ENCODE measurements at regions of chr20 and their contacts with region 1.

Region 1: DNA sequence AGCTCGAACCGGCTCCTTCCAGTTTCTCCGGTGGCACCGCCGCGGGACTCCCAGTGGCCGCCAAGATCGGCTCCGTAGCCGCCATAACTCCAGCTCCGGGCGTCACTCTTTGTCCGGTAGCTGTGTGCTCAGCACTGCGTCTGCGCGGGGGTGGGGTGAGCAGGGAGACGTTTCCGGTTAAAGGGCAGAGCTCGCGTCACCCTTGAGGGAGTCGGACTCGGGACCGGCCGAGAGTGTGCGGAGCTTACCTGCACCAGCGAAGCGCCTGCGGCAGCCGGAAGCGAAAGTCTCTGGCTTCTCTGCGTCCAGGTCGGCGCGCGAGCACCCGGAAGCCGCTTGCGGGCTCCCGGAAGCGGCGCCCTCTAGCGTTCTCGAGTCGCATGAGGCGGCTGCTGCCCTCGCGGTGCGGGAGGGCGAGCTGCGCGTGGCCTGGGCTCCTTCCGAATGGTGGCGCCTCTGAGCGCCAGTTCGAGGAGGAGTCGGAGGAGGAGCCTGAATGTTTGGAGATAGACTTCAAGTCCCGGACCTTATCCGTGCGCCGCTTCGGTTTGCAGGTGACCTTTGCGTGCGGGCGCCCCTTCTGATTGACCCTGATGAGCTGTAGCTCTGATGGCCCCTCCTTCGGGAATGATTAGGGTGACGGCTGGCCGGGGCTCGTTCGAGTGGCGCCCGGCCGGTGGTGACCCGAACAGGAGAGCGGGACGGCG is at the start of gene SCAND1:
- DNase-seq: peak; percentile 94
- ATAC-seq: peak; percentile 86
- H3K4me3 Mint-ChIP-seq: peak within 1 kb of the TSS; percentile 100
- H3K27ac Mint-ChIP-seq: peak within 1 kb of the TSS; percentile 100
- H3K4me1 Mint-ChIP-seq: peaks cover 22% of the 10 kb centered on the region
- H3K27me3 Mint-ChIP-seq: no peaks in the 10 kb centered on the region
- CTCF ChIP-seq: peak; percentile 48
- total RNA-seq, gene SCAND1: 35.9 and 43.2 TPM in 2 replicates

Region 2: DNA sequence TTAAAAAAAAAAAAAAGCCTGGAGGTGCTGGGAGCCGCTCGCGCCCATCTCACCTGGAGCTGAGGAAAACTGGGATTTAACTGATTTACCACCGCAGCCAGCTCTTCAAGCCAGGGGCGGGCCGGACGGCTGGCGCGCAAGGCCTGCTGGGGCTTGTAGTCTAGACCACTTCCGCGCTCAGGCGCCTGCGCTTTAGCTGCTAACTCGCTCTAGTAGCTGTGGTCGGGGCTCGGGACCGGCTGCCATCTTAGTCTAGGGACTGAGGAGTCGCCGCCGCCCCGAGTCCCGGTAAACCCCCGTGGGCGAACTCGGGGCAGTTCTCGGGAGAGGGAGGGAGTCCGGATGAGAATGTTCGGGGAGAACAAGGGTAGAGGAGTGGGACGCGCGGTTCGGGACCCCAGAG is 1591.3 kb before region 1 on chr20 and contains the start of gene ITCH:
- CTCF ChIA-PET with region 1: no interaction called
- POLR2A ChIA-PET with region 1: no interaction called
- intact Hi-C with region 1: loop called (anchors 5 kb)
- DNase-seq: peak; percentile 88
- ATAC-seq: peak; percentile 96
- H3K4me3 Mint-ChIP-seq: peak within 1 kb of the TSS; percentile 100
- H3K27ac Mint-ChIP-seq: peak within 1 kb of the TSS; percentile 99
- H3K4me1 Mint-ChIP-seq: peaks cover 41% of the 10 kb centered on the region
- H3K27me3 Mint-ChIP-seq: peaks cover 1% of the 10 kb centered on the region
- CTCF ChIP-seq: no peak
- total RNA-seq, gene ITCH: 62.6 and 66.3 TPM in 2 replicates

Region 3: GRCh38 chr20:35284267-35284991 is 669.9 kb before region 1 on chr20 and contains the start of gene EIF6:
- CTCF ChIA-PET with region 1: no interaction called
- POLR2A ChIA-PET with region 1: interaction called, 4 read pairs
- intact Hi-C with region 1: loop called (anchors 2 kb)
- DNase-seq: peak; percentile 72
- ATAC-seq: peak; percentile 86
- H3K4me3 Mint-ChIP-seq: peak within 1 kb of the TSS; percentile 90
- H3K27ac Mint-ChIP-seq: peak within 1 kb of the TSS; percentile 92
- H3K4me1 Mint-ChIP-seq: peaks cover 32% of the 10 kb centered on the region
- H3K27me3 Mint-ChIP-seq: no peaks in the 10 kb centered on the region
- CTCF ChIP-seq: no peak
- total RNA-seq, gene EIF6: 137 and 148 TPM in 2 replicates

Region 4: GRCh38 chr20:35619196-35620095 is 334.9 kb before region 1 on chr20:
- CTCF ChIA-PET with region 1: no interaction called
- POLR2A ChIA-PET with region 1: interaction called, 16 read pairs
- intact Hi-C with region 1: loop called (anchors 5 kb)
- DNase-seq: peak; percentile 74
- ATAC-seq: peak; percentile 23
- H3K4me3 Mint-ChIP-seq: peak overlapping the region; percentile 87
- H3K27ac Mint-ChIP-seq: peak overlapping the region; percentile 66
- H3K4me1 Mint-ChIP-seq: peaks cover 40% of the 10 kb centered on the region
- H3K27me3 Mint-ChIP-seq: peaks cover 2% of the 10 kb centered on the region
- CTCF ChIP-seq: no peak

Region 5: DNA sequence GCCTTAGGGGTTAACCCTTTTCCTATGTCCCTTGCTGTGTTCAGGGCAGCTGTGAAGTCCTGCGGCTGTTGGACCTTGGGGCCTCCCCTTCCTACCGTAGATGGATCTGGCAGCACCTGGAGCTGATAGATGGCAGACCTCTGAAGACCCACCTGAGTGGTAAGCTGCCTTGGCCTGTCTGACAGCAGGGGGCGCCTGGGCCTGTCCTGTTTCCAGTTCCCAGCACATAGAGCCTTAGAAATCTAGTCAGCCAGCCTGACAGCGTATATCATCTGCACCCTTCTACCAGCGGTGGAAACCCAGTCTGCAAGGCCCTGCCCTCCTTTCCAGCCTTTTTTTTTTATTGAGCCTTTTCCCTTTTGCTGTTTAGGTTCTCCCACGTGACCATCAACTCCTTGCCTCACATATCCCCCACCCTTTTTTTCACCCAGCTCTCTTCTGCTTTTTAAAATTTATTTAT is 40.7 kb after region 1 on chr20:
- CTCF ChIA-PET with region 1: interaction called, 17 read pairs
- POLR2A ChIA-PET with region 1: no interaction called
- intact Hi-C with region 1: loop called (anchors 1 kb)
- DNase-seq: peak; percentile 72
- ATAC-seq: peak; percentile 85
- H3K4me3 Mint-ChIP-seq: no peak overlapping the region
- H3K27ac Mint-ChIP-seq: no peak overlapping the region
- H3K4me1 Mint-ChIP-seq: peaks cover 5% of the 10 kb centered on the region
- H3K27me3 Mint-ChIP-seq: peaks cover 7% of the 10 kb centered on the region
- CTCF ChIP-seq: peak; percentile 25

Region 6: DNA sequence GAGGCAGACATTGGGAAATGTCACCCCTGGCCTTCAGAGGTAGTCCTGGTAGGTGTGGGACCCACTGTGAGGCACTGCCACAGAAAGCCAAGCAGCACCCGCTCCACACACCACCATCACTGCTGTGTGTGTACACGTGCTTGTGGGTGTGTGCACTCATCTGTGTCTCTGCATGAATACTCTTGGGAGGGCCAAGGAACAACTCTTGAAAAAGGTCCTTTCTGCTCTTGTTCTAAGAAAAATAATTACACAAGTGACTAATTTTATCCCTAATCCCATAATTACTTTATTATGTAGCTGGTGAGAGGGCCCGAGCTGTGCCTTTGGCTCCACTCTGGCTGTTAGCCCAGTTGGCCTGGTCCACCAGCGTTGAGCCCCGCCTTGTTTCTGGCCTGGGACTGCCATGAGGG is 178.5 kb after region 1 on chr20:
- CTCF ChIA-PET with region 1: no interaction called
- POLR2A ChIA-PET with region 1: no interaction called
- intact Hi-C with region 1: loop called (anchors 1 kb)
- DNase-seq: no peak
- ATAC-seq: peak; percentile 95
- H3K4me3 Mint-ChIP-seq: no peak overlapping the region
- H3K27ac Mint-ChIP-seq: no peak overlapping the region
- H3K4me1 Mint-ChIP-seq: peaks cover 14% of the 10 kb centered on the region
- H3K27me3 Mint-ChIP-seq: no peaks in the 10 kb centered on the region
- CTCF ChIP-seq: no peak

Region 7: DNA sequence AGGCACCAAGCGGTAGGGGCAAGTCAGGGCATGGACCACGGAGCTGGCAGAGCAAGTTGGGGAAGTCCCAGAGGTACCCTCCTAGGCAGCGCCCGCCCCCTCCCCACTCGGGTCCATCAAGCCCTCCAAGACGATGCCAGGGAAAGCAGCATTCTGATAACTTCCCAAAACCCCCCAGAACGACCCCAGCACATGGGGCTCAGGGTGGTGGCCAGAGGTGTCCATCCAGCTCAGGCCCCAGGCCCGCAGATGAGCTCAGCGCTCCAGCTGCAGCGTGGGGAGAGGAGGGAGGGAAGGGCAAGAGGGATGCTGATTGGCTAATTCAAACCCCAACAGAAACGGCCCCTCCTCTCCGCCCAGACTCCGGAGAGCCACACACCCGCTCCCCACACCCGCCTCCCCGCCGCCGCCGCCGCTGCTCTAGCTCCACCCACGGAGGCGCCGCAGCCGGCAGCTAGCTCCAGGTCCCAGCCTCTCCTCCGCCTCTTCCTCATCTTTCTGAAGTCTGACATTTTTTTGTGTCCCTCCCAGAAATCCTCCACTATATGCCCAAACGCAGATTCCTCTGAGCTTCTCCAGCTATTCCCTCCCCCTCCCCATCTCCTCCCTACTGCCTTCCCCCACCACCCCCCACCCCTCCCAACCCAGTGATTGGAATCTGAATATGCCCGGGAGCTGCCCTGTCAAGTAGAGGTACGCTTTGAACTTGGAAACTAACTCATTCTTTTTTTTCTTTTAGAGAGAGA is 881.3 kb after region 1 on chr20:
- CTCF ChIA-PET with region 1: no interaction called
- POLR2A ChIA-PET with region 1: interaction called, 7 read pairs
- intact Hi-C with region 1: loop called (anchors 10 kb)
- DNase-seq: peak; percentile 72
- ATAC-seq: peak; percentile 92
- H3K4me3 Mint-ChIP-seq: peak overlapping the region; percentile 79
- H3K27ac Mint-ChIP-seq: peak overlapping the region; percentile 74
- H3K4me1 Mint-ChIP-seq: peaks cover 49% of the 10 kb centered on the region
- H3K27me3 Mint-ChIP-seq: no peaks in the 10 kb centered on the region
- CTCF ChIP-seq: no peak